ENCODE measurements at regions of chrX and their contacts with region 1.

Region 1: DNA sequence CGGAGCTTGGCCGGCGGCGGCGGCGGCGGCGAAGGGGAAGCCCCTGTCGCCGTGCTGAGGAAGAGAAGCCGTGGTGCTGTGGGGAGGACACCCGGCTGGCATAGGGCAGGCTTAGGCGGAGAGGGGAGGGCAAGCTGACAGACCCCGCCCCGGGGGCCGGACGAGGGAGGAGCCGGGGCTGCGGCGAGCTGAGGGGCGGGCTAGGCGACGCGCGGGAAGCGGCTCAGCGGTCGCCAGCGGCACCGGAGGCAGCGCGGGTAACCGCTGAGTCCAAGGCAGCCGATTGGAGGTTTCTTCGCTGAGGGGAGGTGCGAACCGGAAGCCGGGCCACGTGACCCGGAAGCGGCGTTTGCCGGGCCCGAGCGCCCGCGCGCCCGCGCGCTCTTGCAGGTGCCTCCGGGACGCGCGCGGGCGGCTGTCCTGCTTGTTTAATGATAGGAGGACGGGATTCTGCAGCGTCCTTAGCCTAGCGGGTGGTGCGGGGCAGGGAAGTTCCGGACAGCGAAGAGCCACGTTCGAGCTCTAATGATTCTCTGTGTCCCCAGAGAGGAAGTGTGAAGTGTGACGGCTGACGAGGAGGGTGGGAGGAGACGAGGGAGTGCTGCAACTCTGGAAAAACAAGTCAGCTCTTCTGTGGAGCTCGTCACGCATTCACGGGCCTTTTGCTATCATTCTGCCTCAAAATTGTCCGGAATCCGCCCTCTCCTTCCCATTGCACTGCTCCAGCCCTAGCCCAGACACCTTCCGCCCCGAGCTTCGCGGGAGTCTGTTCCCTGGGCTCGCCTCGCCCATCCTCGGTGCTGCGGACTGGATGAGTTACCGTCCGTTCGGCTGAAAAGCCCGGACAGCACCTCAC is at the start of gene AP1S2:
- DNase-seq: peak; percentile 92
- H3K4me3 ChIP-seq: peak within 1 kb of the TSS; percentile 85
- H3K27ac ChIP-seq: peak within 1 kb of the TSS; percentile 95
- H3K4me1 ChIP-seq: peaks cover 33% of the 10 kb centered on the region
- CTCF ChIP-seq: no peak
- total RNA-seq, gene AP1S2: 40.2 and 47.0 TPM in 2 replicates

Region 2: GRCh38 chrX:15789979-15790768 is 64.8 kb before region 1 on chrX and contains the start of gene ZRSR2:
- CTCF ChIA-PET with region 1: no interaction called
- POLR2A ChIA-PET with region 1: no interaction called
- intact Hi-C with region 1: loop called (anchors 1 kb)
- DNase-seq: peak; percentile 86
- H3K4me3 ChIP-seq: peak within 1 kb of the TSS; percentile 89
- H3K27ac ChIP-seq: peak within 1 kb of the TSS; percentile 89
- H3K4me1 ChIP-seq: peaks cover 7% of the 10 kb centered on the region
- CTCF ChIP-seq: no peak
- total RNA-seq, gene ZRSR2: 6.2 and 6.5 TPM in 2 replicates

Region 3: DNA sequence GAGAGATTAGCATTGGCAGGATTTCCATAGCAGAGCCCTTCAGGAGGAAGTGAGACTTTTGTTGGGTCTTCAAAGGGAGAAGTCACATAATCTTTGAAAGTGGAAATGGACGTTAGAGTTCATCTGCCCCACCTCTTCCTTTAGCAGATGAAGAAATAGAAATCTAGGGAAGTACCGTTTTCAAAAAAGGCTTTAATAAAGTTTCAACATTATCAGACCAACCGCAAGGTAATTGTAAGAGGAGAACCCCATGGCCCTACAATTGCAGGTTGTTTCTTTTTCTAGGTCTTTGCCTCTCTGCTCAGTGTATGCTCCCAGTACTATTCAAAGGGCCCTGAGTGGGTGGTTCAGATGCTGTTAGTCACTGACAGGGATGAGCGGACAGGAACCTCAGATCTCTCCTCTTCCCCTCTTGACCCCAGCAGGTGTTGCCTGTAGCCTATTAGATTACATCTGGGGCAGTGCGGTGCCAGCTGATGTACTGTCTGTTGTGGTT is 48.3 kb after region 1 on chrX:
- CTCF ChIA-PET with region 1: no interaction called
- POLR2A ChIA-PET with region 1: interaction called, 3 read pairs
- intact Hi-C with region 1: loop called (anchors 1 kb)
- DNase-seq: peak; percentile 87
- H3K4me3 ChIP-seq: peak overlapping the region; percentile 50
- H3K27ac ChIP-seq: peak overlapping the region; percentile 99
- H3K4me1 ChIP-seq: peaks cover 44% of the 10 kb centered on the region
- CTCF ChIP-seq: no peak

Region 4: DNA sequence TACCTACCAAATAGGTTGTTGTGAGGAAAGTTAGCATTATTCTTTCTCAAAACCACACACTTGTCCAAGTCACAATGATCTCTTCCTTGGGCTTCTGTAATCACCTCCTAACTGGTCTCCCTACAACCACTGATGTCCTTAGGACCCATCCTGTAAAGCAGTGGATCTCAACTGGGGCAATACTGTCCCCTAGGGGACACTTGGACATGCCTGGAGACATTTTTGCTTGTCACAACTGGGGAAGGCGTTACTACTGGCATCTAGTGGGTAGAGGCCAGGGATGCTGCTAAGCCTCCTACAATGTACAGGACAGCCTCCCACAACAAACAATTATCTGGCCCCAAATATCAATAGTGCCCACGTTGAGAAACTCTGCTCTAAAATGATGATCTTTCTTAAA is 118.4 kb after region 1 on chrX:
- CTCF ChIA-PET with region 1: interaction called, 4 read pairs
- POLR2A ChIA-PET with region 1: no interaction called
- intact Hi-C with region 1: loop called (anchors 1 kb)
- DNase-seq: peak; percentile 56
- H3K4me3 ChIP-seq: no peak overlapping the region
- H3K27ac ChIP-seq: no peak overlapping the region
- H3K4me1 ChIP-seq: no peaks in the 10 kb centered on the region
- CTCF ChIP-seq: peak; percentile 67

Region 5: GRCh38 chrX:16067886-16068515 is 213.1 kb after region 1 on chrX:
- CTCF ChIA-PET with region 1: no interaction called
- POLR2A ChIA-PET with region 1: no interaction called
- intact Hi-C with region 1: no loop called
- DNase-seq: no peak
- H3K4me3 ChIP-seq: no peak overlapping the region
- H3K27ac ChIP-seq: no peak overlapping the region
- H3K4me1 ChIP-seq: no peaks in the 10 kb centered on the region
- CTCF ChIP-seq: no peak

Region 6: DNA sequence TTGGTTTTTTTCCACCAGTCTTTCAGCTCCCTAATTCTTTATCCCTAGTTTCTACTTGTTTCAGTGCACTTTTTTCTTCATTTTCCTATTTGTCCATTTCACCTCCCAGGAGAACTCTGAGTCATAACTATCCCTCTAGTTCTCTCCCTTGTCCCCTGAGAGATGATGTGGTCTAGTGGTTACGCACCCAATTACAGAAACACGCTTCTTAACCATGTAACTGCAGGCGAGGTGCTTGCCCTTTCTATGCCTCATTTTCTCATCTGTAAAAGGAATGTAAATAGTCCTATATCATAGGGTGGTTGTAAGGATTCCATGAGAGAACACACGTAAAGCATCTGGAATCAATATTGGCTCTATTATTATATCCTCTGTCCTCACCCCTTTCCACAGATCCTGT is 259.7 kb after region 1 on chrX:
- CTCF ChIA-PET with region 1: no interaction called
- POLR2A ChIA-PET with region 1: interaction called, 3 read pairs
- intact Hi-C with region 1: loop called (anchors 5 kb)
- DNase-seq: no peak
- H3K4me3 ChIP-seq: peak overlapping the region; percentile 34
- H3K27ac ChIP-seq: peak overlapping the region; percentile 37
- H3K4me1 ChIP-seq: peaks cover 51% of the 10 kb centered on the region
- CTCF ChIP-seq: no peak

Region 7: DNA sequence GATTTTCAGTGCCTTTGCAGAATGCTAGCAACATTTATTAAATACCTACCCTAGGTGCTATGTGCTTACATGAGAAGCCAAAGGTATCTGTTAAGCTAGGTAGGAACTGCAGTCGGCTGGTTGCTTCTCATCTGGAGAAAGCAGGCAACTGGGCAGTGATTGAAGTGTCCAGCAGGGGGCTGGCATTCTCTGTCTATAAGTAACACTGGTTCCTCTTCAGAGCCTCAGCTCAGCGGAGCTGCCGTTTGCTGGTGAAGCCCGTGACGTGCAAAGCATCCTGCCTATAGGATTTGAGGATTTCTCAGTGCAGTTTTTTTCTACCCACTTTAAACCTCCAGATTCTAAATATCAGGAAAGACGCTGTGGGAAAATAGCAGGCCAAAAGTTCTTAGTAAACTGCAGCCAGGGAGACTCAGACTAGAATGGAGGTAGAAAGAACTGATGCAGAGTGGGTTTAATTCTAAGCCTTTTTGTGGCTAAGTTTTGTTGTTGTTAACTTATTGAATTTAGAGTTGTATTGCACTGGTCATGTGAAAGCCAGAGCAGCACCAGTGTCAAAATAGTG is 268.4 kb after region 1 on chrX and contains the start of gene GRPR:
- CTCF ChIA-PET with region 1: no interaction called
- POLR2A ChIA-PET with region 1: no interaction called
- intact Hi-C with region 1: loop called (anchors 5 kb)
- DNase-seq: peak; percentile 89
- H3K4me3 ChIP-seq: no peak within 1 kb of the TSS
- H3K27ac ChIP-seq: peak within 1 kb of the TSS; percentile 13
- H3K4me1 ChIP-seq: peaks cover 82% of the 10 kb centered on the region
- CTCF ChIP-seq: peak; percentile 78
- total RNA-seq, gene GRPR: 0.47 TPM in 1 of 2 replicates, not detected in the other

Region 8: GRCh38 chrX:16138108-16138427 is 283.1 kb after region 1 on chrX:
- CTCF ChIA-PET with region 1: no interaction called
- POLR2A ChIA-PET with region 1: no interaction called
- intact Hi-C with region 1: loop called (anchors 2 kb)
- DNase-seq: peak; percentile 65
- H3K4me3 ChIP-seq: no peak overlapping the region
- H3K27ac ChIP-seq: no peak overlapping the region
- H3K4me1 ChIP-seq: peaks cover 18% of the 10 kb centered on the region
- CTCF ChIP-seq: peak; percentile 80